OCI-LY7 (cell line): ENCODE measurements at regions of chr1 and their contacts with region 1.

Region 1: DNA sequence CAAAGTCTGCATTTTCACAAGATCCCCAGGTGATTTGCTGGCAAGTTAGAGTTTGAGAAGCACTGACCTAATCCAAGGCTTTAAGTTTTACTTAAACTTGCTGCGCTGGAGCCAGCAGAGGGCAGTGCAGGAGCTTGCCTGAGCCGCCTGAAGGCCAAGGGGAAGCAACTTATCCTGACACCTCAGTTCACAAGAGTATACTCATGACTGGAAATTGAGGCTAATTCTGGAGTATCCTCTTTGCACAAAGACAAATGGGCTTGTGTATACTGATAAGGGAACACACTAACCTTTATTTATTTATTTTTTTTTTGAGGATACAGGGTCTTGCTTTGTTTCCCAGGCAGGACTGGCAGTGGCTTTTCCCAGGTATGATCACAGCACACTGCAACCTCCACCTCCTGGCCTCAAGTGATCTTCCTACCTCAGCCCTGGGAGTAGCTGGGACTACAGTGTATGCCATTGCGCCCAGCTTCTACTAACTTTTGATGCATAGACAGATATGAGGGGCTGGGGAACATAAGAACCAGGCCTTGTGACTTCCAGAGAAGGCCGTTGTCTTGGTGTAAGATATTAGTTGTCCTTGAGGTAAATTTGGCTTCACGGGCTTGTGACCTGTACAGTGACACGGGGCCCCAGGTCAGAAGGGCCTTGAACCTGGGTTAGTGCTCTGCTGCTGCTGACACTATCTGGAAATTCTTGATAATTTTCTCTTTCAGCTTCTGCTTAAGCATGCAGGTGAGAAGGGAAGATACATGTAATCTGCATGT is 29.0 kb upstream of the SLAMF1 start:
- DNase-seq: peak; percentile 90
- H3K4me3 ChIP-seq: peak overlapping the region; percentile 51
- H3K27ac ChIP-seq: peak overlapping the region; percentile 93
- H3K4me1 ChIP-seq: peaks cover 57% of the 10 kb centered on the region
- CTCF ChIP-seq: peak; percentile 99

Region 2: GRCh38 chr1:160267284-160267991 is 408.4 kb before region 1 on chr1:
- CTCF ChIA-PET with region 1: no interaction called
- POLR2A ChIA-PET with region 1: no interaction called
- intact Hi-C with region 1: no loop called
- DNase-seq: no peak
- H3K4me3 ChIP-seq: no peak overlapping the region
- H3K27ac ChIP-seq: no peak overlapping the region
- H3K4me1 ChIP-seq: peaks cover 5% of the 10 kb centered on the region
- CTCF ChIP-seq: no peak

Region 3: GRCh38 chr1:160428655-160429054 is 247.2 kb before region 1 on chr1:
- CTCF ChIA-PET with region 1: no interaction called
- POLR2A ChIA-PET with region 1: interaction called, 4 read pairs
- intact Hi-C with region 1: loop called (anchors 1 kb)
- DNase-seq: peak; percentile 81
- H3K4me3 ChIP-seq: peak overlapping the region; percentile 24
- H3K27ac ChIP-seq: peak overlapping the region; percentile 87
- H3K4me1 ChIP-seq: peaks cover 52% of the 10 kb centered on the region
- CTCF ChIP-seq: peak; percentile 99

Region 4: DNA sequence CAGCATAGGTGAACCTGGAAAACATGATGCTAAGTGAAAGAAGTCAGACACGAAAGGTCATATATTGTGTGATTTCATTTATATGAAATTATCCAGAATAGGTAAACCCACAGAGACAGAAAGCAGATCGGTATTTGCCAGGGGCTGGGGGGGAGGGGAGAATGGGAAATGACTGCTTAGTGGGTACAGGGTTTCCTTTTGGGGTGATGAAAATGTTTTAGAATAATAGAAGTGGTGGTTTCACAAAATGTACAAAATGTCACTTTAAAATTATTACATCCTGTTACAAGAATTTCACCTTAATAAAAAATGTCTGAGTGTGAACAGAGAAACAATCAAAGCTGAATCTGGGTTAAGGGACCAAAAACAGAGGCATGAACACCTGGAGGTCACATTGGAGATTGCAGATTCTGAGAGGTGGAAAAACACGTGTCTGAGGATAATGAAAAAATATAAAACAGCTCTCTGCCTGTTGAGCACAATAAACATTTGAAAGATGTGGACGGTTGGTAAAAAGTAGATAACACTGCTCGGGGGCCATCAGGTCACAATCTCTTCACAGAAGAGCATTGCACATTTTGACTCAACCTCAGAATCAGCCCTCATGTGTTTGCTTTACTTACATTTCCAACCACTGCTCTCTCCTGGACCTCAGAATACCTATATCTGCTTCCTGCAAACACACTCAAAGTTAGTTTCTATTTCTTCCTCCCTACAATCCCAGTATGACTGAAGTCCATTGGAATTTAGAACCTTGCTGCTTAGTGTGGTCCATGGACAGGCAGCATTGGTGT is 156.0 kb before region 1 on chr1:
- CTCF ChIA-PET with region 1: no interaction called
- POLR2A ChIA-PET with region 1: no interaction called
- intact Hi-C with region 1: loop called (anchors 5 kb)
- DNase-seq: peak; percentile 83
- H3K4me3 ChIP-seq: peak overlapping the region; percentile 83
- H3K27ac ChIP-seq: peak overlapping the region; percentile 98
- H3K4me1 ChIP-seq: peaks cover 71% of the 10 kb centered on the region
- CTCF ChIP-seq: peak; percentile 72

Region 5: GRCh38 chr1:160558660-160559380 is 117.0 kb before region 1 on chr1:
- CTCF ChIA-PET with region 1: no interaction called
- POLR2A ChIA-PET with region 1: no interaction called
- intact Hi-C with region 1: no loop called
- DNase-seq: no peak
- H3K4me3 ChIP-seq: no peak overlapping the region
- H3K27ac ChIP-seq: no peak overlapping the region
- H3K4me1 ChIP-seq: peaks cover 17% of the 10 kb centered on the region
- CTCF ChIP-seq: no peak

Region 6: DNA sequence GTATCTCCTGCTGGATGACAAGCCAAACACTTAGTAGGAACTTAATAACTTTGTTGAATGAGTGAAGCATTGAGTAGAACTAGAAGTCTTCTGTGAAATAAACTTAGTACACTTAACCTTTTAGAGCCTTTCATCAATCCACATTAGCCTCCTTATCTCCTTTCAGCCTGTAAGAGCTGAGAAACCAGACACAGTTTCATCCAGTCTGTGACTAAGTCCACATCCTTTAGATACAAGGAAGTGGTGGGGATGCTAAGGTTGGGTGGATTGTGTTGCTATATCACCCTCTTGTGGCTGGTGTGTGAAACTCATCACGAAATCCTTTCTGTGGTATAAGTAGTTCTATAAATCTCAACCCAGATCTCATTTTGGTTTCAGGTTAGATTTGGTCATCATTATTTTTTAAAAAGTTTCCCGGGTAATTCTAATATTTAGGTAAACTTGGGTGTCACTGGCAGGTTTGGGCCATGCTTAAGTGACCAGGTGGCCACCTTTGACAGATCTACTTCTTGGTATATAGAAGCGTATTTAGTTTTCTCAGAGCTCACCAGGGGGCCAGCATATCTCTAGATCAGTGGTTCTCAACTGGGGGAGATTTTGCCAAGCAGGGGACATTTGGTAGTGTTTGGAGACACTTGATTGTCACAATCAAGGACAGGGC is 68.7 kb before region 1 on chr1:
- CTCF ChIA-PET with region 1: interaction called, 5 read pairs
- POLR2A ChIA-PET with region 1: interaction called, 7 read pairs
- intact Hi-C with region 1: loop called (anchors 2 kb)
- DNase-seq: peak; percentile 93
- H3K4me3 ChIP-seq: no peak overlapping the region
- H3K27ac ChIP-seq: peak overlapping the region; percentile 55
- H3K4me1 ChIP-seq: peaks cover 60% of the 10 kb centered on the region
- CTCF ChIP-seq: peak; percentile 98

Region 7: DNA sequence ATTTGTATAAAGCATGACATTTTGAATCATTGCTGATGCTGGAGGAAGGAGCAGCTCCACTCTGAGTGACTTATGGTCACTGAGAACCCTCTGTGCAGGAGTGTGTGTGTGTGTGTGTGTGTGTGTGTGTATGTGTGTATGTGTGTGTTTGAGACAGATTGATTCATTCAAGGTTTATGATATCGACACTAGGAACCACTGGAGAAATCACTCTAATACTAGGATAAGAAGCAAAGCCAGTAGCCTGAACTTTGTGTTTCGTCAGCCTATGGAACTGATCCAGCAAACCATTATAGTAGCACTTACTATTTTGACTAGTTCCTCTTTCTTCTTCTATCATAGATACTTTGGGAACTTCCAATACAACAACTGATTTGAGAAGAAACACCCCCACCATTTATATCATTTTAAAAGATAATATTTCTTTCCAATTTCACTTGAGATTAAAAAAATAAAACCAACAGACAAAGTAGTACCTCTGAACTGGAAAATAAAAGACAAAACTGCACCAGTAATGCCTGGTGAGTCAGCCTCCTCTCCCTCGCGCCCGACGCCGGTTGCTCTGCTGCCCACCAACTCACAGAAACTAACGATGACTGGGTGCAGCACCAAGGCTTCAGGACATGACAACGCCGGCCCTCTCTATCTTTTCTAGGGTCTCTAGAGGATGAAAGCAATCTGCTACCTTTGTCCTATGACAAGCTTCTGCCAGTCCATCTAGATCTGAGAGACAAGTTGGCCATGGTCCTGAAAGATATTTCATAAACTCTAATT is 49.9 kb before region 1 on chr1:
- CTCF ChIA-PET with region 1: interaction called, 12 read pairs
- POLR2A ChIA-PET with region 1: interaction called, 14 read pairs
- intact Hi-C with region 1: loop called (anchors 1 kb)
- DNase-seq: no peak
- H3K4me3 ChIP-seq: peak overlapping the region; percentile 43
- H3K27ac ChIP-seq: peak overlapping the region; percentile 87
- H3K4me1 ChIP-seq: peaks cover 96% of the 10 kb centered on the region
- CTCF ChIP-seq: no peak

Region 8: GRCh38 chr1:160711602-160712311 is 35.9 kb after region 1 on chr1 and contains the start of gene CD48:
- CTCF ChIA-PET with region 1: interaction called, 7 read pairs
- POLR2A ChIA-PET with region 1: interaction called, 13 read pairs
- intact Hi-C with region 1: loop called (anchors 1 kb)
- DNase-seq: peak; percentile 88
- H3K4me3 ChIP-seq: peak within 1 kb of the TSS; percentile 77
- H3K27ac ChIP-seq: peak within 1 kb of the TSS; percentile 98
- H3K4me1 ChIP-seq: peaks cover 61% of the 10 kb centered on the region
- CTCF ChIP-seq: no peak
- total RNA-seq, gene CD48: 131 and 150 TPM in 2 replicates

Region 9: DNA sequence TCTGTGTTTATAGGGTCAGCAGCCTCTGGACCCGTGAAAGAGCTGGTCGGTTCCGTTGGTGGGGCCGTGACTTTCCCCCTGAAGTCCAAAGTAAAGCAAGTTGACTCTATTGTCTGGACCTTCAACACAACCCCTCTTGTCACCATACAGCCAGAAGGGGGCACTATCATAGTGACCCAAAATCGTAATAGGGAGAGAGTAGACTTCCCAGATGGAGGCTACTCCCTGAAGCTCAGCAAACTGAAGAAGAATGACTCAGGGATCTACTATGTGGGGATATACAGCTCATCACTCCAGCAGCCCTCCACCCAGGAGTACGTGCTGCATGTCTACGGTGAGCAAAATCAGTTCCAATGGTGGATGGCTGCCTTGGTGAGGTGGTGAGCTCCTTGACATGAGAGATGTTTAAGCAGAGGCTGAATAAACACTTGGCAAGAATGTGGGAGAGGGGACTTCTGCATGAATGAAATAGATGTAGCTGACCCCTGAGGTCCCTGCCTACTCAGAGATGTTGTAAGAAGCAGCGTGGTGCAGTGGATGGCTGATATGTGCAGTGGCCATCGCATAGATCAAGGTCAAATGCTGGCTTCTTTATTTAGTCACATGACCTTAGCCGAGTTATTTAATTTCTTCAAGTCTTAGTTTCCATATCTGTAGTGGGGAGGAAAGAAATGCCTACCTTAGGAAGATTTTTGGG is 72.5 kb after region 1 on chr1:
- CTCF ChIA-PET with region 1: no interaction called
- POLR2A ChIA-PET with region 1: no interaction called
- intact Hi-C with region 1: no loop called
- DNase-seq: no peak
- H3K4me3 ChIP-seq: no peak overlapping the region
- H3K27ac ChIP-seq: no peak overlapping the region
- H3K4me1 ChIP-seq: peaks cover 6% of the 10 kb centered on the region
- CTCF ChIP-seq: peak; percentile 75

Region 10: GRCh38 chr1:160777486-160778089 is 101.8 kb after region 1 on chr1:
- CTCF ChIA-PET with region 1: interaction called, 16 read pairs
- POLR2A ChIA-PET with region 1: interaction called, 6 read pairs
- intact Hi-C with region 1: loop called (anchors 1 kb)
- DNase-seq: peak; percentile 81
- H3K4me3 ChIP-seq: no peak overlapping the region
- H3K27ac ChIP-seq: no peak overlapping the region
- H3K4me1 ChIP-seq: peaks cover 19% of the 10 kb centered on the region
- CTCF ChIP-seq: peak; percentile 88